Psoas muscle (tissue), 8 donors: ENCODE measurements at regions of chr6 and their contacts with region 1.

Region 1: GRCh38 chr6:113879186-113880096 is 22.3 kb downstream of the MARCKS start:
- DNase-seq: no peak
- ATAC-seq: peak; percentile 92 to 100 (median 98)
- H3K4me3 ChIP-seq: peak overlapping the region; percentile 43
- H3K27ac ChIP-seq: no peak overlapping the region
- H3K4me1 ChIP-seq: no peaks in the 10 kb centered on the region
- H3K27me3 ChIP-seq: no peaks in the 10 kb centered on the region
- CTCF ChIP-seq: peak; percentile 83

Region 2: DNA sequence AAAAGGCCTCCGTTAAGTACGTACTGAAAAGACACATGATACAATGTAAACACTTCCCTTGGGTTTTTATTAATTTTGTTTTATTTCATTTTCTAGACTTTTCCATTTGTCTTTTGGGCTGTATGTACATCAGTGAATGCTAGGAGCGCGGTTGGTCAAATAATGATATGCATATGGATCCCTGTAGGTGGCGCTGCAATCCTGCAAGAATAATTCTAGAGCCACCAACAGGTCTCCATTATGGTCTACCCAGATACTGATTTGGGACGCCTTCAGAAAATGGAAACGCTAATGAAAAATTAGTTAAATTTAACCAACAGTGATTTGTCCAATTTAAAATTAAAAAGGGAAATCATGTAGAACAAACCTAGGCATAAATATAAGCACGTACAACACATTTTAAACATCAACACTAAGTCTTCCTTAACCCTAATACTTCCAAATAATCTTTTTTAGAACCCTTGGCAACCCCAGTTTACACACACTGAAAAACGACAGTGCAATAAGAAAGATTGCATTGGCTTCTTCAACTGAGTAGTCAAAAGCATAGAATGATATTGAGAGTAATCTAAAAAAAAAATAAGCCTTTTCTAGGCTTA is 1098.8 kb before region 1 on chr6:
- intact Hi-C with region 1: loop called in 1 of 2 experiments (anchors 5 kb)
- DNase-seq: peak; percentile 39 to 48
- ATAC-seq: peak; percentile 70 to 90 (median 84)
- H3K4me3 ChIP-seq: no peak overlapping the region
- H3K27ac ChIP-seq: no peak overlapping the region
- H3K4me1 ChIP-seq: no peaks in the 10 kb centered on the region
- H3K27me3 ChIP-seq: no peaks in the 10 kb centered on the region
- CTCF ChIP-seq: peak; percentile 89

Region 3: DNA sequence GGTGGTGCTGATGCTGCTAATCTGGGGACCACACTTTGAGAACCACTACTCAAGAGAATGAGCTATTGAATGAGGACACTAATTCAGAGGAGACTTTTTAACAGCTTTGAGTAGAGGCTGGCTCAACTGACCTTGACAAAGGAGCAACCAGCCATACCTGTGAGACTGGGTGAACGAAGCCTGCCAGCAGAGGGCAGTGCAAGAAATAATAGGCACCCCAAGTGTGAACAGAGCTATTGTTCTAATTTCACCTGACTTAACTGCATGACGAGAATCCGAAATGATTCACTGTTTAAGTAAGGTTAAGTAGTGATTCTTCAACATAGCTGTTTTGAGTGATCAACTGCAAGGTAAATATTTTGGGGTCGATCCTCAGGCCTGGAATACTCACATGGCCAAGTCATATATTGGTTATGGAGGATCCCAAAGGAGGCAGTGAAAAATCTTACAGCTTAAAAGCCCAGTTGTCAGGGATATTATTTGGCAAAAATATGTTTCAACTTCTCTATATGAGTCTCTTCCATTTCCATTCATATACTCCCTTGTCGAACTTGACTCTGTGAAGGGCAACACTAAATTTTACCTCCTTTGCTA is 572.8 kb before region 1 on chr6:
- intact Hi-C with region 1: loop called in 1 of 2 experiments (anchors 5 kb)
- DNase-seq: peak; percentile 44 to 70
- ATAC-seq: peak; percentile 30 to 91 (median 69)
- H3K4me3 ChIP-seq: no peak overlapping the region
- H3K27ac ChIP-seq: no peak overlapping the region
- H3K4me1 ChIP-seq: no peaks in the 10 kb centered on the region
- H3K27me3 ChIP-seq: no peaks in the 10 kb centered on the region
- CTCF ChIP-seq: peak; percentile 42